ENCODE measurements at regions of chr7 and their contacts with region 1.

Region 1: GRCh38 chr7:1151653-1152425 is 8.2 kb downstream of the ZFAND2A start:
- DNase-seq: no peak
- H3K4me3 ChIP-seq: no peak overlapping the region
- H3K27ac ChIP-seq: no peak overlapping the region
- H3K4me1 ChIP-seq: no peaks in the 10 kb centered on the region
- H3K27me3 ChIP-seq: no peaks in the 10 kb centered on the region
- CTCF ChIP-seq: no peak
- POLR2A ChIP-seq: no peak

Region 2: GRCh38 chr7:359766-360361 is 792.0 kb before region 1 on chr7:
- intact Hi-C with region 1: loop called (anchors 5 kb)
- DNase-seq: no peak
- H3K4me3 ChIP-seq: peak overlapping the region in 1 of 3 donors; percentile 6
- H3K27ac ChIP-seq: peak overlapping the region; percentile 88 to 94
- H3K4me1 ChIP-seq: peaks cover 0 to 4% of the 10 kb centered on the region in 2 donors
- H3K27me3 ChIP-seq: peaks cover 0 to 17% of the 10 kb centered on the region in 2 donors
- CTCF ChIP-seq: no peak
- POLR2A ChIP-seq: no peak